Endothelial cell of umbilical vein (primary cell): ENCODE measurements at regions of chr6 and their contacts with region 1.

Region 1: DNA sequence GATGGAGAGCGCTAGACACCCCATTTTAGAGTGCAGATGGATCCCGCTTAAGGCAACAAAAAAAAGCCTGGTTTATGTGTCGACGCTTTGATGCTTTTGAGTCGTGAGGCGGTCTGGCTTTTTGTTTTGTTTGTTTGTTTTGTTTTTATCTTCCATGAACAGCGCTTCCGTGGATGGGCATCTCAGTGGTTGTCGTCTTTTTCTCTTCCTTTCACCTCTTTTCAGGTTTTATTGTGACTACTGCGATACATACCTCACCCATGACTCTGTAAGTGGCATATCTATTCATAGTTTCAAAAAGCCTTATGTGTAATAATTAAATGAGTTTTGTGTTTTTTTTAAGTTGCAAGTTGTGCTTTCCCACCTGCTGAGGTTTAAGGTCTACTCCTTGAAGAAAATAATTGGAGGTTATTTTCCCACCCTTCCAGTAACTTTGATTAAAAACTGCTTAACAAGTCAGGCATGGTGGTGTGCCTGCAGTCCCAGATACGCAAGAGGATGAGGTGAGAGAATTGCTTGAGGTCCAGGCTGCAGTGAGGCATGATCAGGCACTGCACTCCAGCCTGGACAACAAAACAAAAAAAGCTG is 476 bp downstream of the SNRPC start:
- DNase-seq: no peak
- H3K4me3 ChIP-seq: peak overlapping the region; percentile 60 to 86 (median 84)
- H3K27ac ChIP-seq: peak overlapping the region; percentile 78
- H3K4me1 ChIP-seq: peaks cover 6% of the 10 kb centered on the region
- H3K27me3 ChIP-seq: no peaks in the 10 kb centered on the region
- CTCF ChIP-seq: no peak
- POLR2A ChIP-seq: no peak

Region 2: GRCh38 chr6:34236131-34236996 is 521.4 kb before region 1 on chr6 and contains the start of gene HMGA1:
- CTCF ChIA-PET with region 1: no interaction called
- POLR2A ChIA-PET with region 1: no interaction called
- dilution Hi-C with region 1: no loop called
- intact Hi-C with region 1: loop called (anchors 1 kb)
- DNase-seq: peak; percentile 88
- H3K4me3 ChIP-seq: peak within 1 kb of the TSS; percentile 94 to 98 (median 97)
- H3K27ac ChIP-seq: peak within 1 kb of the TSS; percentile 91
- H3K4me1 ChIP-seq: peaks cover 40% of the 10 kb centered on the region
- H3K27me3 ChIP-seq: no peaks in the 10 kb centered on the region
- CTCF ChIP-seq: no peak
- POLR2A ChIP-seq: peak; percentile 98
- total RNA-seq, gene HMGA1: 1,031 and 1,108 TPM in 2 replicates

Region 3: GRCh38 chr6:34332251-34333198 is 425.3 kb before region 1 on chr6:
- CTCF ChIA-PET with region 1: no interaction called
- POLR2A ChIA-PET with region 1: no interaction called
- dilution Hi-C with region 1: no loop called
- intact Hi-C with region 1: no loop called
- DNase-seq: no peak
- H3K4me3 ChIP-seq: no peak overlapping the region
- H3K27ac ChIP-seq: no peak overlapping the region
- H3K4me1 ChIP-seq: peaks cover 13% of the 10 kb centered on the region
- H3K27me3 ChIP-seq: no peaks in the 10 kb centered on the region
- CTCF ChIP-seq: no peak
- POLR2A ChIP-seq: no peak

Region 4: GRCh38 chr6:34526992-34527728 is 230.6 kb before region 1 on chr6:
- CTCF ChIA-PET with region 1: no interaction called
- POLR2A ChIA-PET with region 1: no interaction called
- dilution Hi-C with region 1: no loop called
- intact Hi-C with region 1: loop called (anchors 2 kb)
- DNase-seq: peak; percentile 89
- H3K4me3 ChIP-seq: peak overlapping the region in 2 of 3 experiments; percentile 4 to 42
- H3K27ac ChIP-seq: no peak overlapping the region
- H3K4me1 ChIP-seq: peaks cover 2% of the 10 kb centered on the region
- H3K27me3 ChIP-seq: no peaks in the 10 kb centered on the region
- CTCF ChIP-seq: peak; percentile 56 to 86
- POLR2A ChIP-seq: peak; percentile 42

Region 5: GRCh38 chr6:34696739-34697543 is 60.8 kb before region 1 on chr6 and contains the start of gene ILRUN:
- CTCF ChIA-PET with region 1: interaction called, 5 read pairs
- POLR2A ChIA-PET with region 1: no interaction called
- dilution Hi-C with region 1: no loop called
- intact Hi-C with region 1: loop called (anchors 1 kb)
- DNase-seq: peak; percentile 94
- H3K4me3 ChIP-seq: peak within 1 kb of the TSS; percentile 81 to 92 (median 83)
- H3K27ac ChIP-seq: peak within 1 kb of the TSS; percentile 77
- H3K4me1 ChIP-seq: peaks cover 14% of the 10 kb centered on the region
- H3K27me3 ChIP-seq: no peaks in the 10 kb centered on the region
- CTCF ChIP-seq: no peak
- POLR2A ChIP-seq: peak; percentile 45
- total RNA-seq, gene ILRUN: 47.0 and 48.9 TPM in 2 replicates

Region 6: GRCh38 chr6:34858681-34859080 is 100.9 kb after region 1 on chr6:
- CTCF ChIA-PET with region 1: no interaction called
- POLR2A ChIA-PET with region 1: interaction called, 10 read pairs
- dilution Hi-C with region 1: no loop called
- intact Hi-C with region 1: no loop called
- DNase-seq: no peak
- H3K4me3 ChIP-seq: no peak overlapping the region
- H3K27ac ChIP-seq: no peak overlapping the region
- H3K4me1 ChIP-seq: no peaks in the 10 kb centered on the region
- H3K27me3 ChIP-seq: no peaks in the 10 kb centered on the region
- CTCF ChIP-seq: no peak
- POLR2A ChIP-seq: no peak

Region 7: GRCh38 chr6:34887753-34888513 is 130.2 kb after region 1 on chr6 and contains the start of gene TAF11:
- CTCF ChIA-PET with region 1: no interaction called
- POLR2A ChIA-PET with region 1: interaction called, 5 read pairs
- dilution Hi-C with region 1: no loop called
- intact Hi-C with region 1: loop called (anchors 1 kb)
- DNase-seq: peak; percentile 93
- H3K4me3 ChIP-seq: peak within 1 kb of the TSS; percentile 80 to 96 (median 87)
- H3K27ac ChIP-seq: peak within 1 kb of the TSS; percentile 82
- H3K4me1 ChIP-seq: peaks cover 14% of the 10 kb centered on the region
- H3K27me3 ChIP-seq: no peaks in the 10 kb centered on the region
- CTCF ChIP-seq: no peak
- POLR2A ChIP-seq: peak; percentile 83
- total RNA-seq, gene TAF11: 37.1 and 41.0 TPM in 2 replicates